B cell (primary cell): ENCODE measurements at regions of chr3 and their contacts with region 1.

Region 1: GRCh38 chr3:17032407-17033034 is 147.8 kb downstream of the PLCL2 start:
- DNase-seq: peak; percentile 19
- ATAC-seq: peak; percentile 28
- H3K4me3 ChIP-seq: no peak overlapping the region
- H3K4me3 Mint-ChIP-seq: no peak overlapping the region
- H3K27ac ChIP-seq: no peak overlapping the region
- H3K27ac Mint-ChIP-seq: no peak overlapping the region
- H3K4me1 ChIP-seq: peaks cover 17 to 25% of the 10 kb centered on the region in 2 donors
- H3K4me1 Mint-ChIP-seq: peaks cover 39% of the 10 kb centered on the region
- H3K27me3 ChIP-seq: no peaks in the 10 kb centered on the region
- H3K27me3 Mint-ChIP-seq: no peaks in the 10 kb centered on the region
- CTCF ChIP-seq: peak; percentile 24

Region 2: DNA sequence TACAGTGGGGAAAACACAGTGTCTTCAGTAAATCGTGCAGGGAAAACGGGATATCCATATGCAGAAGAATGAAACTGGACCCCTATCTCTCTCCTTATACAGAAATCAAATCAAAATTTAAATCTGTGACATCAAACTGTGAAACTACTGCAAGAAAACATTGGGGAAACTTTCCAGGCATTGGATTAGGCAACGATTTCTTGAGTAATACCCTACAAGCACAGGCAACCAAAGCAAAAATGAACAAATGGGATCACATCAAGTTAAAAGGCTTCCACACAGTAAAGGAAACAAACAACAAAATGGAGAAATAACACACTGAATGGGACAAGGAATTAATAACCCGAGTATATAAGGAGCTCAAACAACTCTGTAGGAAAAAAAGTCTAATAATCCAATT is 17.6 kb after region 1 on chr3:
- CTCF ChIA-PET with region 1: no interaction called
- POLR2A ChIA-PET with region 1: no interaction called
- intact Hi-C with region 1: loop called (anchors 2 kb)
- DNase-seq: no peak
- ATAC-seq: no peak
- H3K4me3 ChIP-seq: no peak overlapping the region
- H3K4me3 Mint-ChIP-seq: no peak overlapping the region
- H3K27ac ChIP-seq: no peak overlapping the region
- H3K27ac Mint-ChIP-seq: no peak overlapping the region
- H3K4me1 ChIP-seq: peaks cover 0 to 5% of the 10 kb centered on the region in 2 donors
- H3K4me1 Mint-ChIP-seq: peaks cover 28% of the 10 kb centered on the region
- H3K27me3 ChIP-seq: no peaks in the 10 kb centered on the region
- H3K27me3 Mint-ChIP-seq: no peaks in the 10 kb centered on the region
- CTCF ChIP-seq: no peak

Region 3: GRCh38 chr3:17233398-17233800 is 200.9 kb after region 1 on chr3:
- CTCF ChIA-PET with region 1: interaction called, 6 read pairs
- POLR2A ChIA-PET with region 1: no interaction called
- intact Hi-C with region 1: loop called (anchors 10 kb)
- DNase-seq: peak; percentile 71
- ATAC-seq: peak; percentile 97
- H3K4me3 ChIP-seq: no peak overlapping the region
- H3K4me3 Mint-ChIP-seq: no peak overlapping the region
- H3K27ac ChIP-seq: no peak overlapping the region
- H3K27ac Mint-ChIP-seq: no peak overlapping the region
- H3K4me1 ChIP-seq: peaks cover 4 to 13% of the 10 kb centered on the region in 2 donors
- H3K4me1 Mint-ChIP-seq: peaks cover 20% of the 10 kb centered on the region
- H3K27me3 ChIP-seq: no peaks in the 10 kb centered on the region
- H3K27me3 Mint-ChIP-seq: no peaks in the 10 kb centered on the region
- CTCF ChIP-seq: peak; percentile 86